ENCODE measurements at regions of chr10 and their contacts with region 1.

Region 1: DNA sequence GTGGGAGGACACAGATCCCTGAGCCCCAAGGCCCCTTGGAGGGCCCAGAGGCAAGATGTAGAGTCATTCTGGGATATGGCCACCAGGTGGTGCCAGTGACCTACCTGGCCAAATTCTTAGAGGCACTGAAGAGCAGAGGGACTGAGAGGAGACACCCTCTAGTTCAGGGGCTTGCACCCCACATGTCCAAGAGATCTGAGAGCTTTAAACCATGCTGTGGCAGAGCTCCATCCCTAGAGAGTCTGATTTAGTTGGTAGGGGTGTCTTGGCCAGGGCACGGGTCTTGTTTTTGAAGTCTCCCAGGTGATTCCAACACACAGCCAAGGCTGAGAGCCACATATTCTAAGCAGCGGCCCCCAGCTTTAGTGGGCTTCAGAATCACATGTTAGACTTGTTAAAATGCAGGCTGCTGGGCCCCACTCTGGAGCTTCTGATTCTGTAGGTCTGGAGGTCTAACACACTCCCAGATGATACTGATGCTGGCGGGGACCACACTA is 52.5 kb downstream of the PRF1 start:
- DNase-seq: peak; percentile 45
- H3K4me3 ChIP-seq: no peak overlapping the region
- CTCF ChIP-seq: peak; percentile 88

Region 2: GRCh38 chr10:70466951-70467350 is 83.1 kb before region 1 on chr10:
- in situ Hi-C with region 1: loop called (anchors 5 kb)
- DNase-seq: no peak
- H3K4me3 ChIP-seq: no peak overlapping the region
- CTCF ChIP-seq: no peak

Measured in astrocyte of the cerebellum (primary cell).